ENCODE measurements at regions of chr10 and their contacts with region 1.

Region 1: GRCh38 chr10:5873515-5873995 is 16.1 kb downstream of the ANKRD16 start:
- DNase-seq: peak; percentile 64
- H3K4me3 ChIP-seq: no peak overlapping the region
- H3K27ac ChIP-seq: no peak overlapping the region
- H3K4me1 ChIP-seq: no peaks in the 10 kb centered on the region
- H3K27me3 ChIP-seq: no peaks in the 10 kb centered on the region
- CTCF ChIP-seq: peak; percentile 57 to 80 (median 76)
- POLR2A ChIP-seq: no peak

Region 2: DNA sequence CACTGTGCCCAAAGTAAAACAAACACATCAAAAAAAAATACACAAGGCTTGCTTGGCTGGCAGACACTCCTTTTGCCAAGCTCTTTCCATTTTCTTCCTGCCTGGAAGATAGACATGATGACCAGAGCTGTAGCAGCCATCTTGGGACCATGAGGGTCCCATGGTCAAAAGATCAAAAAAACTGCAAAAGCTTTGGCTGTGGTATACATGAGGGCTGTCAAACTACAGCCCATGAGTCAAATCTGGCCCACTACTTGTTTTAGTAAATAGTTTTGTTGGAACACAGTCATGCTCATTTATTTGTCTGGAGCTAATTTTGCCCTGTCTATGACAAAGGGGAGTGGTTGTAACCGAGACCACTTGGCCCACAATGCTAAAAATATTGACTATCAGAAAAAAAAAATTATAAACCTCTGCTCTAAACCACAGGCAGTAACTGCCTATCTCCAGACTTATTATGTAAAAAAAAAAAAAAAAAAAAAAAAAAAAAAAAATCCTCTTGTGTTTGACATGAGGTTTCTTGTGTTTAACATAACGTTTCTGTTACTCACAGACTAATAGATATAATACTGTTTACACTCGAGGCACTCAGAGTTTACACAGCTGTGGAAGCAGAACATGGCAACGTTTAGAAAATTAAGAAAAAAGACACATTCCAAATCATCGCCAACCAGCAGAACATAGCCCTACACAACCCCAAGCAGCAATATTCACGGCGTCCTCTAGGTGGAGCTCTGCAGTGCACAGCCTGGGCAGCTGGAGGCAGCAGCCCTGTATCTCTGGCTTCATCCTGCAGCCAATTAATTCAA is 244.0 kb before region 1 on chr10:
- intact Hi-C with region 1: loop called (anchors 10 kb)
- DNase-seq: peak; percentile 50
- H3K4me3 ChIP-seq: no peak overlapping the region
- H3K27ac ChIP-seq: peak overlapping the region in 1 of 2 donors; percentile 19
- H3K4me1 ChIP-seq: no peaks in the 10 kb centered on the region
- H3K27me3 ChIP-seq: no peaks in the 10 kb centered on the region
- CTCF ChIP-seq: peak; percentile 17 to 65 (median 54)
- POLR2A ChIP-seq: no peak

Region 3: GRCh38 chr10:5684318-5684970 is 189.1 kb before region 1 on chr10 and contains the start of gene TASOR2:
- intact Hi-C with region 1: loop called (anchors 5 kb)
- DNase-seq: peak; percentile 94
- H3K4me3 ChIP-seq: peak within 1 kb of the TSS; percentile 87 to 96
- H3K27ac ChIP-seq: peak within 1 kb of the TSS; percentile 87 to 88
- H3K4me1 ChIP-seq: peaks cover 6% of the 10 kb centered on the region
- H3K27me3 ChIP-seq: no peaks in the 10 kb centered on the region
- CTCF ChIP-seq: peak in 1 of 4 experiments; percentile 23
- POLR2A ChIP-seq: peak; percentile 51
- total RNA-seq, gene TASOR2: 55.0 to 97.9 TPM

Region 4: DNA sequence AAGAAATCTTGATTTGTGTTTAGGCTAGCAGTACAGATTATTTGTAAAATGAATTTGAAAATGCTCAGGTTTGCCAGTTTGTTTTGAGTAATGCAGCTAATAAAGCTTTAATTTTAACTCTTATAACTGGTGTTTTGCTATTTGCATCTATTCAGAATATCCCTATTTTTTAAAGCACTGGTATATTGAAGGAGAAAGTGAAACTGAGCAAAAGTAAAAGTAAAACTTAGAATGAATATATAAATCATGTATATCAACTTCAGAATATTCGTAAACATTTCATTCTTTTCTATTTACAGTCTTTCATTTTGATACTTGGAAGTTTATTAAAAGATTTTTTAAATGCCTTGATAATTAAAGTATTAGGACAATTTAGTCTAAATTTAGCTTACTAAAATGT is 162.7 kb before region 1 on chr10:
- intact Hi-C with region 1: no loop called
- DNase-seq: no peak
- H3K4me3 ChIP-seq: no peak overlapping the region
- H3K27ac ChIP-seq: no peak overlapping the region
- H3K4me1 ChIP-seq: no peaks in the 10 kb centered on the region
- H3K27me3 ChIP-seq: no peaks in the 10 kb centered on the region
- CTCF ChIP-seq: no peak
- POLR2A ChIP-seq: no peak

Measured in prostate gland (tissue), 2 donors.